Ascending aorta (tissue), 2 donors: ENCODE measurements at regions of chr4 and their contacts with region 1.

Region 1: GRCh38 chr4:183261953-183262775 is 57.9 kb downstream of the CLDN22 start:
- DNase-seq: peak in 1 of 2 donors; percentile 87
- H3K4me3 ChIP-seq: no peak overlapping the region
- H3K27ac ChIP-seq: peak overlapping the region; percentile 15 to 35
- H3K4me1 ChIP-seq: peaks cover 0 to 4% of the 10 kb centered on the region in 2 donors
- H3K27me3 ChIP-seq: no peaks in the 10 kb centered on the region
- CTCF ChIP-seq: peak; percentile 68 to 78 (median 71)

Region 2: GRCh38 chr4:182917182-182918043 is 344.8 kb before region 1 on chr4 and contains the start of gene DCTD:
- intact Hi-C with region 1: loop called (anchors 5 kb)
- DNase-seq: peak; percentile 23 to 88
- H3K4me3 ChIP-seq: peak within 1 kb of the TSS; percentile 76 to 87
- H3K27ac ChIP-seq: peak within 1 kb of the TSS; percentile 86 to 99
- H3K4me1 ChIP-seq: peaks cover 0 to 8% of the 10 kb centered on the region in 2 donors
- H3K27me3 ChIP-seq: no peaks in the 10 kb centered on the region
- CTCF ChIP-seq: peak in 2 of 3 experiments; percentile 38 to 44
- total RNA-seq, gene DCTD: 17.2 TPM

Region 3: GRCh38 chr4:182938205-182938645 is 323.9 kb before region 1 on chr4:
- intact Hi-C with region 1: loop called (anchors 1 kb)
- DNase-seq: peak in 1 of 2 donors; percentile 77
- H3K4me3 ChIP-seq: no peak overlapping the region
- H3K27ac ChIP-seq: no peak overlapping the region
- H3K4me1 ChIP-seq: no peaks in the 10 kb centered on the region
- H3K27me3 ChIP-seq: no peaks in the 10 kb centered on the region
- CTCF ChIP-seq: peak; percentile 59 to 92 (median 89)

Region 4: DNA sequence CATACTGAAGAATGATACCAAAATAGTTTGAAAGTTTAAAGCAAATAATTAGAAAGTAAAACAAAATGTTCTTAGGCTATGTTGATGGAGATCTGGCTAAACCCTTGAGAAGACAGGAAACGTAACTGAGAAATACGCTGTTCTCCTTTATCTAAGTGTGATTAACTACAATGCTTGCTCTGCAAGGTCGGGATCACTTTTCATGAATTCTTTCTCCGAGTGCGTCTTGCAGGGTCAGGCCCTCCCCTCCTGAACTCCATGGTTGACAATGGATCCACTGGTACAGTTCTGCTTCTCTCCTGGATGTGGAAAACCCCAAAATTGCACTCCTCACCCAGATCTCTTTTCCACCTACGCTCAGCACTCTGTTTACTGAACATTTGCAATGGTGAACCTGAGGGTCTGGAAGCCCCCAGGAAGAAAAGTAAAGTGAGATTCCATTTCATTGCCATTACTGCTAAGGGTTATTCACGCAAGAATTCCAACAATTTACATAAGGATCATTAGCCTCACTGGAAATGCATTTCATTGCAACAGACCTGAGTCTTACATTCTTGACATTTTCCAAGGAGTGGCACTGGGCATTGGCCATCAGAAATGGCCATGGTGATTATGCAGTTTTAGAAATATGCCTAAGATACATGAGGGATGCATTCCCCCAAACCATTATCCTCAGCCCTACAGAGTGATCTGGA is 187.7 kb before region 1 on chr4:
- intact Hi-C with region 1: loop called (anchors 1 kb)
- DNase-seq: no peak
- H3K4me3 ChIP-seq: no peak overlapping the region
- H3K27ac ChIP-seq: no peak overlapping the region
- H3K4me1 ChIP-seq: no peaks in the 10 kb centered on the region
- H3K27me3 ChIP-seq: no peaks in the 10 kb centered on the region
- CTCF ChIP-seq: no peak

Region 5: DNA sequence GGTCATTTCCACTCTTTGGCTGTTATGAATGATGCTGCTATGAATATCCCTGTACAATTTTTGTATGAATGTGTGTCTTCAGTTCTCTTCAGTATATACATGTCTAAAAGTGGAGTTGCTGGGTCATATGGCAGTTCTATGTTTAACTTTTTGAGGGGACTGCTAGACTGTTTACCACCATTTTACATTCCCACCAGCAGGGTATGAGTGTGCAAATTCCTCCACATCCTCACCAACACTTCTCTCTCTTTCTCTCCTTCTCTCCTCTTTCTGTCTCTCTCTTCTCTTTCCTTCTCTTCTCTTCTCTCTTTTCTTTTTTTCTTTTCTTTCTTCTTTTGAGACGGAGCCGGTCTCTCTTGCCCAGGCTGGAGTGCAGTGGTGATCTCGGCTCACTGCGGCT is 155.3 kb before region 1 on chr4:
- intact Hi-C with region 1: no loop called
- DNase-seq: no peak
- H3K4me3 ChIP-seq: no peak overlapping the region
- H3K27ac ChIP-seq: no peak overlapping the region
- H3K4me1 ChIP-seq: peaks cover 0 to 1% of the 10 kb centered on the region in 2 donors
- H3K27me3 ChIP-seq: no peaks in the 10 kb centered on the region
- CTCF ChIP-seq: no peak